ENCODE measurements at regions of chr9 and their contacts with region 1.

Region 1: GRCh38 chr9:99819856-99820684 is 1.6 kb upstream of the NR4A3 start:
- DNase-seq: peak; percentile 70 to 89
- H3K4me3 ChIP-seq: peak overlapping the region; percentile 87
- H3K27ac ChIP-seq: peak overlapping the region; percentile 68
- H3K4me1 ChIP-seq: peaks cover 32% of the 10 kb centered on the region
- H3K27me3 ChIP-seq: peaks cover 20% of the 10 kb centered on the region
- CTCF ChIP-seq: no peak

Region 2: GRCh38 chr9:99680191-99680590 is 139.9 kb before region 1 on chr9:
- CTCF ChIA-PET with region 1: no interaction called
- POLR2A ChIA-PET with region 1: no interaction called
- intact Hi-C with region 1: no loop called
- DNase-seq: no peak
- H3K4me3 ChIP-seq: no peak overlapping the region
- H3K27ac ChIP-seq: no peak overlapping the region
- H3K4me1 ChIP-seq: no peaks in the 10 kb centered on the region
- H3K27me3 ChIP-seq: no peaks in the 10 kb centered on the region
- CTCF ChIP-seq: no peak

Region 3: GRCh38 chr9:99906403-99907207 is 86.5 kb after region 1 on chr9 and contains the start of gene STX17:
- CTCF ChIA-PET with region 1: no interaction called
- POLR2A ChIA-PET with region 1: no interaction called
- intact Hi-C with region 1: loop called (anchors 1 kb)
- DNase-seq: peak; percentile 57 to 83
- H3K4me3 ChIP-seq: peak within 1 kb of the TSS; percentile 87
- H3K27ac ChIP-seq: peak within 1 kb of the TSS; percentile 86
- H3K4me1 ChIP-seq: peaks cover 16% of the 10 kb centered on the region
- H3K27me3 ChIP-seq: no peaks in the 10 kb centered on the region
- CTCF ChIP-seq: no peak
- total RNA-seq, gene STX17: 46.3 and 47.8 TPM in 2 replicates

Region 4: GRCh38 chr9:99966720-99967119 is 146.7 kb after region 1 on chr9:
- CTCF ChIA-PET with region 1: no interaction called
- POLR2A ChIA-PET with region 1: no interaction called
- intact Hi-C with region 1: loop called (anchors 10 kb)
- DNase-seq: peak; percentile 44 to 84
- H3K4me3 ChIP-seq: no peak overlapping the region
- H3K27ac ChIP-seq: peak overlapping the region; percentile 13; the same call in 1 of the 2 replicates
- H3K4me1 ChIP-seq: peaks cover 10% of the 10 kb centered on the region
- H3K27me3 ChIP-seq: no peaks in the 10 kb centered on the region
- CTCF ChIP-seq: no peak

Region 5: GRCh38 chr9:100098887-100099721 is 279.0 kb after region 1 on chr9 and contains the starts of genes ERP44 and INVS:
- CTCF ChIA-PET with region 1: no interaction called
- POLR2A ChIA-PET with region 1: no interaction called
- intact Hi-C with region 1: loop called (anchors 2 kb)
- DNase-seq: peak; percentile 97 to 98
- H3K4me3 ChIP-seq: peak within 1 kb of the TSS; percentile 87
- H3K27ac ChIP-seq: peak within 1 kb of the TSS; percentile 94
- H3K4me1 ChIP-seq: peaks cover 20% of the 10 kb centered on the region
- H3K27me3 ChIP-seq: no peaks in the 10 kb centered on the region
- CTCF ChIP-seq: no peak
- total RNA-seq, gene ERP44: 15.9 and 19.5 TPM in 2 replicates
- total RNA-seq, gene INVS: 20.1 and 24.0 TPM in 2 replicates